Activated CD4-positive, alpha-beta T cell treated with anti-CD3 and anti-CD28 coated beads for 36 hours (primary cell): ENCODE measurements at regions of chr4 and their contacts with region 1.

Region 1: GRCh38 chr4:140095694-140096482 is 58.1 kb downstream of the MAML3 start:
- DNase-seq: peak; percentile 81
- ATAC-seq: peak; percentile 83
- H3K4me3 Mint-ChIP-seq: peak overlapping the region; percentile 75
- H3K27ac Mint-ChIP-seq: peak overlapping the region; percentile 99
- H3K4me1 Mint-ChIP-seq: peaks cover 93% of the 10 kb centered on the region
- H3K27me3 Mint-ChIP-seq: no peaks in the 10 kb centered on the region

Region 2: DNA sequence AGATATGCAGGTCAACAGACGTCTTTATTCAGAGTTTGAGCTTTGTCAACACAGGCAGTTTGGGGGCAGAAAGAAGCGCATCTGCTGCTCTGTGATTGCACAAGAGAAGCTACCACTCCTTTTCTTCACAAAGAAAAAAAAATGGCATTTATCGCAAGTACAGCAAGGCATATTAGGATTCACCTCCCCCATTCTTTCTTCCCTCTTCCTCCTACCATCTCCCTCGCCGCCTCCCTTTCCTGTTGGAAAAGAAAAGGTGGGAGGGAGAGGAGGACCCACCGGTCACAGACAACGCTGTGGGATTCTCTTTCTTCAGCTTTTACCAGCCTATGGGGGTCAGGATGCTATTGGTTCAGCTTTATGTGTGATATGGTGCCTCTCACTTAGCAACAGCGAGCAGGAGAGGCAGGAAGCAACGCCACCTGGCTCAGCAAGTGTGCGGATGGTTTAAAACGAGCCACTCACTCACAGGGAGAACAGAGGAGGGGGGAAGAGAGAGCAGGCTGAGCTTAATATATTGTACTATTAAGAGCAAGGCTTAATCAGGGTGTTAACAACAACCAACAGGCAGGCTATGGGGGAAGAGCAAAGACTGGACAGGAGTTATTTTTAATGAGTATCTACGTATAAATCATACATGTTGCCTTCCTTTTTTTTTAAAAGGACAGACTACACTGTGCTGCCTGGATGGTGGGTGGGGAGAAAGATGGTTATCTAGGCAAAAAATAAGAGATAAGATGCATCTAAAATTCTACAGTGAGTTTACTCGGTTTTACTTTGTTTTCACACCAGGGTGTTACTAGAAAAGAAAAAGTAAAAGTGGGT is 46.7 kb before region 1 on chr4:
- CTCF ChIA-PET with region 1: interaction called, 7 read pairs
- POLR2A ChIA-PET with region 1: interaction called, 3 read pairs
- intact Hi-C with region 1: loop called in 1 of 2 experiments (anchors 5 kb)
- DNase-seq: peak; percentile 71
- ATAC-seq: peak; percentile 91
- H3K4me3 Mint-ChIP-seq: peak overlapping the region; percentile 73
- H3K27ac Mint-ChIP-seq: peak overlapping the region; percentile 87
- H3K4me1 Mint-ChIP-seq: peaks cover 45% of the 10 kb centered on the region
- H3K27me3 Mint-ChIP-seq: peaks cover 8% of the 10 kb centered on the region

Region 3: GRCh38 chr4:140071806-140072205 is 24.1 kb before region 1 on chr4:
- CTCF ChIA-PET with region 1: interaction called, 5 read pairs
- POLR2A ChIA-PET with region 1: interaction called, 5 read pairs
- intact Hi-C with region 1: loop called (anchors 1 to 2 kb)
- DNase-seq: peak; percentile 85
- ATAC-seq: peak; percentile 85
- H3K4me3 Mint-ChIP-seq: peak overlapping the region; percentile 29
- H3K27ac Mint-ChIP-seq: peak overlapping the region; percentile 56
- H3K4me1 Mint-ChIP-seq: peaks cover 44% of the 10 kb centered on the region
- H3K27me3 Mint-ChIP-seq: peaks cover 15% of the 10 kb centered on the region

Region 4: DNA sequence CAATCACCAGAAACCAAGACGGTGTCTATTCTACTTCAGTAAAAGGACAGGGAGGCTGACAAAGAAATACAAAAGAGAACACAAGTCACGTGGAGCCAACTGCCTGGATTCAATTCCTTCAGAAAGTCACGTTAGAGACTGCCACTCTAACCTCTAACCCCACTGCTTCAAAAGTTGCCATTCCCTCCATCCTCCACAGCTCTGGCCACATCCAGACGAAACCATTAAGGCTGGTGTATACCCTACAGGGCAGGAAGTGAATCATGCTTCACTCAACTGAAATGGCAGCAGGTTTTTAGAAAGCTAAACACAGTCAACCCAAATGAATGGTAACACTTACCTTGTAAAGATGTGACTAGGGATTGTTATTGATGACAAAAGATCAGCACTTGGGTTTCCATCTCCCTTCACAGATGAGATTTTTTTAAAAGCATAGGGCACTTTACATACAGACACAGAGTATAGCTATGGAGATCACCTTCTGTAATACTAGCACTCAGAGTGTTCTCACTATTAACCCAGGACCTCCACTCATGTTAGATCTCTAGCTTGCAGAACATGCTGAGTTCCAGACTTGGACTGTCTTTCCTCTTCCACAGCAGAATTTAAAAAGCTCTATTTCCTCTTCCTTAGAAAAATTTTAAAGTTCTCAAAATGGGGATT is 20.7 kb after region 1 on chr4:
- CTCF ChIA-PET with region 1: interaction called, 3 read pairs
- POLR2A ChIA-PET with region 1: no interaction called
- intact Hi-C with region 1: loop called in 1 of 2 experiments (anchors 2 kb)
- DNase-seq: peak; percentile 58
- ATAC-seq: peak; percentile 99
- H3K4me3 Mint-ChIP-seq: no peak overlapping the region
- H3K27ac Mint-ChIP-seq: peak overlapping the region; percentile 72
- H3K4me1 Mint-ChIP-seq: peaks cover 25% of the 10 kb centered on the region
- H3K27me3 Mint-ChIP-seq: no peaks in the 10 kb centered on the region

Region 5: GRCh38 chr4:140609548-140610425 is 513.9 kb after region 1 on chr4:
- CTCF ChIA-PET with region 1: no interaction called
- POLR2A ChIA-PET with region 1: no interaction called
- intact Hi-C with region 1: no loop called
- DNase-seq: no peak
- ATAC-seq: peak; percentile 71
- H3K4me3 Mint-ChIP-seq: no peak overlapping the region
- H3K27ac Mint-ChIP-seq: no peak overlapping the region
- H3K4me1 Mint-ChIP-seq: no peaks in the 10 kb centered on the region
- H3K27me3 Mint-ChIP-seq: no peaks in the 10 kb centered on the region